ENCODE measurements at regions of chr1 and their contacts with region 1.

Region 1: DNA sequence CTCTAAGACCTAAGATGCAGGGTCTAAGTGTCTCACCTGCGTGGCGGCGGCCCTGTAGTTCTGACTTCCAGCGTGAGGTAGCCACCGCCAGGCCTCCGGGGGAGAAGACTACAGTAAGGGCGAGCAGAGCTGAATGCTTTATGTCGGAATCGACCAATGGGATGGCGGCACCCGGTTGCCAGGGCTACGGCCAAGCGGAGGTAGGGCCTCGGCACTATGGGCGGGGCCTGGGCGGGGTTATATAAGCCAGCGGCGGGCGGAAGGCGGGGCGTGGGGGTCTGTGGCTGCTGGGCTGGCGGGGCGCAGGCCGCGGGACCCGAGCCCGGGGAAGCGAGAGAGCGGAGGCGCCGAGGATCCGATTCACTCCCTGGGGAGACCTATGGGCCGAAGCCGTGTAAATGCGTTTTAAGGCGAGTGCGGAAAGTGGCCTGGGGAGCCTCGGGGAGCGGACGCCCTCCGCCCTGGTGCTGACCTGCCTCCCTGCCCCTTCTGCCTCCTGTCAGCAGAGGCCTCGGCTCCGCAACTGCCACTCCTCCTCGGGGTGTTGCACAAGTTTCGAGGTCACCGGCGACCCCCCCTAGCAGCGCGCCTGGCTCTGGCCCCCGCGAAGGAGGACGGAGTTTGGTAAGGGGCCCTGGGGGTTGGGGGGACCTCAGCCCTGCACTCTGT is at the start of gene AZIN2:
- DNase-seq: peak; percentile 95 to 100 (median 97)
- ATAC-seq: peak; percentile 99
- H3K4me3 ChIP-seq: peak within 1 kb of the TSS; percentile 82
- H3K4me3 Mint-ChIP-seq: peak within 1 kb of the TSS; percentile 94
- H3K27ac ChIP-seq: peak within 1 kb of the TSS in 1 of 2 donors; percentile 27
- H3K27ac Mint-ChIP-seq: peak within 1 kb of the TSS; percentile 81
- H3K4me1 ChIP-seq: peaks cover 23% of the 10 kb centered on the region
- H3K4me1 Mint-ChIP-seq: peaks cover 36% of the 10 kb centered on the region
- H3K27me3 ChIP-seq: no peaks in the 10 kb centered on the region
- H3K27me3 Mint-ChIP-seq: no peaks in the 10 kb centered on the region
- CTCF ChIP-seq: no peak
- total RNA-seq, gene AZIN2: 4.6 to 4.9 TPM

Region 2: GRCh38 chr1:32716312-32717148 is 364.5 kb before region 1 on chr1:
- CTCF ChIA-PET with region 1: interaction called, 3 read pairs
- POLR2A ChIA-PET with region 1: no interaction called
- intact Hi-C with region 1: loop called in 1 of 2 experiments (anchors 10 kb)
- DNase-seq: peak in 12 of 14 experiments; percentile 9 to 69 (median 34)
- ATAC-seq: peak; percentile 51
- H3K4me3 ChIP-seq: no peak overlapping the region
- H3K4me3 Mint-ChIP-seq: no peak overlapping the region
- H3K27ac ChIP-seq: no peak overlapping the region
- H3K27ac Mint-ChIP-seq: no peak overlapping the region
- H3K4me1 ChIP-seq: peaks cover 17% of the 10 kb centered on the region
- H3K4me1 Mint-ChIP-seq: peaks cover 5% of the 10 kb centered on the region
- H3K27me3 ChIP-seq: peaks cover 0 to 3% of the 10 kb centered on the region in 2 experiments
- H3K27me3 Mint-ChIP-seq: peaks cover 8% of the 10 kb centered on the region
- CTCF ChIP-seq: no peak

Region 3: DNA sequence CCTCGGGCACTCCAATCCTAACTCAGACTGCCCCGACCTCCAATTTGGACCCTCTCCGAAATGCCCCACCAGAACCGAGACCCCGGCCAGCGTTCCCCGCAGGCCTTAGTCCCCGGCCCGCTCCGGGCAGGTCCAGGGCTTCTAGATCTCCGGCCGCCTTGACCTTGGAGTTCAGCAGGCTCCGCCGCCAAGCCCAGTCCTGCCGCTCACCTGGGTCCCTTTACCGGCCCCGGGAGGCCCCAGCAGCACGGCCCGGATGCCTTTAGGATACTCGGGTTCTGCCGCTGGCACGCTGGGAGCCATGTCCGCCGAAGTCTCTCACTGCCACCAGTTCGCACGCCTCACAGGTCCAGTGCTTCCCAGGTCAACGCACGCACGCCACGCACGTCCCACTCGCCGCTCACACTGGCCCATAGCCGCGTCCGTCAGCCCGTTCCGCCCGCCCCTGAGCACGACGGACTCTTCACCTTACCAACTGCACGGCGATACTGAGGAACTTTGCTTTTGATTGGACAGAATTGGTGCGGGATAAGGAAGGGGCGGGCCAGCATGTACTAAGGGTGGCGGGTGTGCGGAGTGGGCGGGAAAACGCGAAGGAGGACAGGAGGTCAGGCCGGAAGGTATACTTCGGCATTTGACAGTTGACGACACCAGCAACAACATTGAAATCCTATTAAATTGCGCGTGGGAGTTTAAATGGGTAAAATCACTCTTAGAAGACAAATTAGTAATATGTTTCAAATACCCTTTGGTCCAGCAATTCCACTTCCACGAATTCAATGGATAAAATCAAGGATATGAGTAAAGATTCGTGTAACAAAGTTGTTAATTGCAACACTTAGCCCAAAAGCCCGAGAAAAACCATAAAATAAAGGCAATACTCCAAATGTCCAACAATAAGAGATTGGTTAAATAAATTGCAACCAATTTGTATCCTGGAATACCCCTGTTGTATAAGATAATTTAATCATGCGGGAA is 44.2 kb before region 1 on chr1 and contains the start of gene AK2:
- CTCF ChIA-PET with region 1: no interaction called
- POLR2A ChIA-PET with region 1: no interaction called
- intact Hi-C with region 1: loop called (anchors 2 to 5 kb)
- DNase-seq: peak; percentile 71 to 95 (median 86)
- ATAC-seq: peak; percentile 99
- H3K4me3 ChIP-seq: peak within 1 kb of the TSS; percentile 93
- H3K4me3 Mint-ChIP-seq: peak within 1 kb of the TSS; percentile 98
- H3K27ac ChIP-seq: peak within 1 kb of the TSS in 1 of 2 donors; percentile 67
- H3K27ac Mint-ChIP-seq: peak within 1 kb of the TSS; percentile 34
- H3K4me1 ChIP-seq: peaks cover 35% of the 10 kb centered on the region
- H3K4me1 Mint-ChIP-seq: peaks cover 48% of the 10 kb centered on the region
- H3K27me3 ChIP-seq: no peaks in the 10 kb centered on the region
- H3K27me3 Mint-ChIP-seq: no peaks in the 10 kb centered on the region
- CTCF ChIP-seq: no peak
- total RNA-seq, gene AK2: 25.6 to 30.4 TPM

Region 4: DNA sequence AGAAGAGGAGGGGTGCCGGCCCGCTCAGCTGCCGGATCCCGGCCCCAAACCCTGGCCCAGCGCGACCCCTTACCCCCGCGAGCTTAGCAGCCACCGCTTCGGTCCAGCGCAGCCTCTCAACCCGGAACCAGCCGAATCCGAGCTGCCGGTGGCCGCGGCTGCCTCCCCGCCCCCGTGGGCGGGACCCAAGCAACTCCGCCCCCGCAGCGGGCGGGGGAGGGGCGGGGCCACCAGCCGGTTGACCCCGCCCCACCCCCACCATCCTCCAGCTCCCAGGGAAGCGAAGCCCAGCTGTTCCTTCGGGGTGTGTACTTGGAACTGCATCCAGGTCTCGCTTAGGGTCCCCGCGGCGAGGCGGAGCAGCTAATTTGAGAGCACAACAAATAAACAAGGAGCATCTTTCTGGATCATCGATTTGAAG is 100.9 kb after region 1 on chr1 and contains the start of gene TRIM62:
- CTCF ChIA-PET with region 1: no interaction called
- POLR2A ChIA-PET with region 1: interaction called, 5 read pairs
- intact Hi-C with region 1: loop called in 1 of 2 experiments (anchors 2 kb)
- DNase-seq: peak; percentile 60 to 89 (median 72)
- ATAC-seq: peak; percentile 71
- H3K4me3 ChIP-seq: peak within 1 kb of the TSS; percentile 88
- H3K4me3 Mint-ChIP-seq: peak within 1 kb of the TSS; percentile 93
- H3K27ac ChIP-seq: peak within 1 kb of the TSS in 1 of 2 donors; percentile 30
- H3K27ac Mint-ChIP-seq: peak within 1 kb of the TSS; percentile 62
- H3K4me1 ChIP-seq: peaks cover 23% of the 10 kb centered on the region
- H3K4me1 Mint-ChIP-seq: peaks cover 34% of the 10 kb centered on the region
- H3K27me3 ChIP-seq: peaks cover 0 to 3% of the 10 kb centered on the region in 2 experiments
- H3K27me3 Mint-ChIP-seq: no peaks in the 10 kb centered on the region
- CTCF ChIP-seq: no peak
- total RNA-seq, gene TRIM62: 18.9 to 23.0 TPM

Region 5: DNA sequence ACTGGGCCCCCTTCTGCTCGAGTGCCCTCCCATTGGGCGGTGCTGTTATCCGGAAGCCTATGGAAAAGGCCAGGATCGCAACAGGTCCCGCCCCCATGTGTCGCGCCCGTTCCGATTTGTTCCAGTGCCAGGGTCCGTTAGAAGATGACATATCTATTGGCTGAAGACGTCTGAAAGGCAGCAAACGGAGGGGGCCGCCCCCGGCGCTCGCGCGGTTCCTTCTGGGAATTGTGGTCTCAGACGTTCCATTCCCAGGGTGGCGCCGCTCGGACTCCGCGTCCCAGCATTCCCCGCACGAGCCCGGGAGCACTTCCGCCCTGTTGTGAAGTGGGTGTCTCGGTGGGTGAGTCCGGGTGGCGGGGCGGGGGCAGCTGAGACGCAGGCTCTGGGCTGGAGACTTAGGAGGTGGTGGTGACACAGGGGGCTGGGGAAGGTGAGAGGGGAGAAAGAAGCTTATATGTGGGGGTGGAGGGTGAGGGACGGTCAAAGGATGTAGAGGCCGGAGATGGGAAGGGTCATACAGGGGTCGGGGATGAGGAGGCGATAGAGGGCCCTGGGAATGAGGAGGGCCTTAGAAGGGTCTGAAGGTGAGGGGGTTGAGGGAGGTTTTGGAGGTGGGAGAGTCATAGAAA is 391.4 kb after region 1 on chr1 and contains the start of gene ZSCAN20:
- CTCF ChIA-PET with region 1: no interaction called
- POLR2A ChIA-PET with region 1: no interaction called
- intact Hi-C with region 1: loop called in 1 of 2 experiments (anchors 5 kb)
- DNase-seq: peak; percentile 62 to 91 (median 80)
- ATAC-seq: peak; percentile 98
- H3K4me3 ChIP-seq: peak within 1 kb of the TSS; percentile 63
- H3K4me3 Mint-ChIP-seq: peak within 1 kb of the TSS; percentile 90
- H3K27ac ChIP-seq: peak within 1 kb of the TSS; percentile 31 to 39
- H3K27ac Mint-ChIP-seq: peak within 1 kb of the TSS; percentile 24
- H3K4me1 ChIP-seq: peaks cover 22% of the 10 kb centered on the region
- H3K4me1 Mint-ChIP-seq: peaks cover 38% of the 10 kb centered on the region
- H3K27me3 ChIP-seq: no peaks in the 10 kb centered on the region
- H3K27me3 Mint-ChIP-seq: no peaks in the 10 kb centered on the region
- CTCF ChIP-seq: no peak
- total RNA-seq, gene ZSCAN20: 0.27 to 0.50 TPM

Measured in CD4-positive, alpha-beta T cell (primary cell).